Right lobe of liver (tissue), 6 donors: ENCODE measurements at regions of chr14 and their contacts with region 1.

Region 1: GRCh38 chr14:94671870-94672444 is 59.8 kb downstream of the SERPINA3 start:
- DNase-seq: peak in 1 of 3 donors; percentile 37
- ATAC-seq: peak in 3 of 4 donors; percentile 47 to 96 (median 68)
- H3K4me3 ChIP-seq: no peak overlapping the region
- H3K27ac ChIP-seq: no peak overlapping the region
- H3K4me1 ChIP-seq: peaks cover 0 to 5% (median 0%) of the 10 kb centered on the region in 4 donors
- H3K27me3 ChIP-seq: no peaks in the 10 kb centered on the region
- CTCF ChIP-seq: no peak
- POLR2A ChIP-seq: no peak

Region 2: DNA sequence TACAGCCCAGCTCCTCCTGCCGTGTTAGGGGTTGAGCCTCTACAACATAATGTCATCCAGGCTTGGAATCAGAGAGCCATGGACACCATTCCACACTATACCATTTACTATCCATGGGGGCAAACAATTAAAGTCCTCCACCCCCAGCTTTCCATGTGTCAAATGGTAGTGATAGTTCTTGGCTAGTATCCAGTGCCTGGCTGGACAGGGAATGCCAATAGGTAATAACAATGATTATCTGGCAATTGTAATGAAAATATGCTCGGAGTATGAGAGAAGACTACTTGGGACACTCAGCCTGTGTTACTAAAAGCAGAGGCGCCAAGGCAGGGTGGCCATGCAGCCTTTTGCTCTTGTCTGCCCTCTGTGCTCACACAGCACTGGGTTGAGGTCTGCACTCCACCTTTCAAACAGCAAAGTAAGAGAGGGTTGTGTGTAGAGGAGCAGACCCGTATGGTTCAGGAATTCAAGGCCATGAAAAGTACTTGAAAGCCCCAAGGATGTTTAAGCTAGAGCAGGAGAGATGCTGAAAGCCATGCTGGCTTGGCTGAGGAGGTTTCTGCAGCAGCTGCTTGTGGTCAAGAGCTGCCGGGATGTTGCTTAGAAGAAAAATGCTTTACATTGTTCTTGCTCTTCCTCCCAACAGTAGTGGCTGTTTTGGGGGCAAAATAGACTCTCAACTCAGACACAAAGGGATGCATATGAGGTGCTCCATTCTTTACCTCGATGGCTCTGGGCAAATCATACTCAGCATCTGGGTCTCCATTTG is 49.1 kb before region 1 on chr14:
- intact Hi-C with region 1: loop called in 1 of 2 experiments (anchors 10 kb)
- DNase-seq: peak in 1 of 3 donors; percentile 6
- ATAC-seq: no peak
- H3K4me3 ChIP-seq: no peak overlapping the region
- H3K27ac ChIP-seq: no peak overlapping the region
- H3K4me1 ChIP-seq: peaks cover 0 to 19% (median under 1%) of the 10 kb centered on the region in 4 donors
- H3K27me3 ChIP-seq: no peaks in the 10 kb centered on the region
- CTCF ChIP-seq: no peak
- POLR2A ChIP-seq: peak; percentile 35

Region 3: DNA sequence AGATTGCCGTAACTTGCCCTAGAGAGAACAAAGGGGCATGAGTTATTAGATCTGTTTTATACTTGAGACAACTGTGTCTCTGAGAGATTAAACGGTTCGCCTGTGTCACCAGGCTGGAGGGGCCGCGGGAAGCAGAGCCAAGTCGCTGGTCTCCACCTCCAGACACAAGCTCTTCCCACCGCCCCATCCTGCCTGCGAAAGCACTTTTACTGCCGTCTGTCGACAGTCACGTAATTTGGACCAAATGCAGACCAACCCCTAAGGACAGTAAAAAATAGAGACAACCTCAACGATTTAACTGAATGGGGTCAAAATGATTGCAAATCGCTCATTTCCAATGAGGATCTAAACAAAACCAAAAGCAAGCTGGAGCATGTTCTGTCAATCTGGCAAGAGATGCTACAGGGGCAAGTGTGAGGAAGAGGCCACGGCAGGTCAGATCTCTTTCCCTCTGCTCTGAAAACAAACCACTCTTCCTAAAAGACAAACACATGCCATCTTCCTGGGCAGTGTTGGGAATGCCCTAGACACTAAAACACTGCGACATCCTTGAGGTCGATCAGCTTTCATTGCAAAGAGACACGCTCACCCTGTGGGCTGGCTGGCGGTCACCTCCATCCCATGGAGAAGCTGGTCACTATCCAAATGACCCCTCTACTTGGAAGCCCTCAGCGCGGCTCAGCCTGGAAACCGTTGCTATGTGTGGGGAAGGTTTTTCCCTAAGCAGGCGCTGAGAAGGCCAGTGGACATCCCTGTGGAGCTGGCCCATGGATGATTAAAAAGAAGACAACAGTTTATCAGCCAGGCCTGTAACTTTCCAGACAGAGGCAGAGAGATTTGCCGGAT is 80.9 kb after region 1 on chr14:
- intact Hi-C with region 1: no loop called
- DNase-seq: no peak
- ATAC-seq: no peak
- H3K4me3 ChIP-seq: no peak overlapping the region
- H3K27ac ChIP-seq: no peak overlapping the region
- H3K4me1 ChIP-seq: no peaks in the 10 kb centered on the region
- H3K27me3 ChIP-seq: no peaks in the 10 kb centered on the region
- CTCF ChIP-seq: no peak
- POLR2A ChIP-seq: no peak